Endothelial cell of umbilical vein (primary cell): ENCODE measurements at regions of chr10 and their contacts with region 1.

Region 1: GRCh38 chr10:6721480-6721879 is 141.4 kb upstream of the PRKCQ start:
- DNase-seq: peak; percentile 94
- H3K4me3 ChIP-seq: peak overlapping the region in 1 of 3 experiments; percentile 55
- H3K27ac ChIP-seq: peak overlapping the region; percentile 100
- H3K4me1 ChIP-seq: peaks cover 29% of the 10 kb centered on the region
- H3K27me3 ChIP-seq: no peaks in the 10 kb centered on the region
- CTCF ChIP-seq: peak; percentile 22 to 38
- POLR2A ChIP-seq: no peak

Region 2: DNA sequence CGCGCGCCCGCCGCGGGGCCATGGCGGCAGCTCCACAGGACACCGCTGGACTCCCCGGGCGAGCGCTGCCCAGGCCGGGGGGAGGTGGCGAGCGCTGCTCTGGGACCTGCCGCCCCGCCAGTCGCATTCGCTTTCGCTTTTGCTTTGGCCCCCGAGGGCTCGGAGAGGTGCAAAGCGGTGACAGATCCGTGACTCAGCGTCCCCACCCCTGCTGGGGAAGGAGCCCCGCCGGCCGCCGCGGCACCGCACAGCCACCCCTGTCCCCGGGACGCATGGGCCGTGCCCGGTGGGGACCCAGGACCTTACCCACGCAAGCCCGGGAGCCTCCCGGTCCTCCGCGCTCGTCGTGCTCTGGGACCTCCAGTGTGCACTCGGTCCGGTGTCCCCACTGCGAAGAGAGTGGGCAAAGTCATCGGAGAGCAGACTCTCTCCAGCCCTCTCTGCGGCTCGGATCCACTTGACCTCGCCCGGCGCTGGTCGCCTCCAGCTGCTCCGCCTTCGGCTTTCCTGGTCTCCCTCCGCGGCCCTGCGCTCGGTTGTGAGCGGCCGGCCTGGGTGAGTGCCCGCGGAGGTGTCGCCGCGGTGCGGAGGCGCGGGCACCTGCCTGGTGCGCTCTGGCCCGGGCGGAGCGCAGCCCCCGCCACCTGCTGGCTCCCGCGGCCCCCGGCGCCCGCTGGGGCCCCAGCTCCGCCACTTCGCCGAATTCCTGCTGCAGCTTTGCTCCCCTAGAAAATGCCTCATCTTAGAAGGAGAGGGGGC is 743.8 kb before region 1 on chr10 and contains the start of gene IL15RA:
- CTCF ChIA-PET with region 1: no interaction called
- POLR2A ChIA-PET with region 1: no interaction called
- dilution Hi-C with region 1: no loop called
- intact Hi-C with region 1: loop called (anchors 10 kb)
- DNase-seq: peak; percentile 82
- H3K4me3 ChIP-seq: peak within 1 kb of the TSS; percentile 10 to 98 (median 47)
- H3K27ac ChIP-seq: peak within 1 kb of the TSS; percentile 60
- H3K4me1 ChIP-seq: peaks cover 14% of the 10 kb centered on the region
- H3K27me3 ChIP-seq: peaks cover 0 to 2% of the 10 kb centered on the region in 2 experiments
- CTCF ChIP-seq: peak; percentile 6 to 13
- POLR2A ChIP-seq: no peak
- total RNA-seq, gene IL15RA: 16.1 and 18.8 TPM in 2 replicates

Region 3: DNA sequence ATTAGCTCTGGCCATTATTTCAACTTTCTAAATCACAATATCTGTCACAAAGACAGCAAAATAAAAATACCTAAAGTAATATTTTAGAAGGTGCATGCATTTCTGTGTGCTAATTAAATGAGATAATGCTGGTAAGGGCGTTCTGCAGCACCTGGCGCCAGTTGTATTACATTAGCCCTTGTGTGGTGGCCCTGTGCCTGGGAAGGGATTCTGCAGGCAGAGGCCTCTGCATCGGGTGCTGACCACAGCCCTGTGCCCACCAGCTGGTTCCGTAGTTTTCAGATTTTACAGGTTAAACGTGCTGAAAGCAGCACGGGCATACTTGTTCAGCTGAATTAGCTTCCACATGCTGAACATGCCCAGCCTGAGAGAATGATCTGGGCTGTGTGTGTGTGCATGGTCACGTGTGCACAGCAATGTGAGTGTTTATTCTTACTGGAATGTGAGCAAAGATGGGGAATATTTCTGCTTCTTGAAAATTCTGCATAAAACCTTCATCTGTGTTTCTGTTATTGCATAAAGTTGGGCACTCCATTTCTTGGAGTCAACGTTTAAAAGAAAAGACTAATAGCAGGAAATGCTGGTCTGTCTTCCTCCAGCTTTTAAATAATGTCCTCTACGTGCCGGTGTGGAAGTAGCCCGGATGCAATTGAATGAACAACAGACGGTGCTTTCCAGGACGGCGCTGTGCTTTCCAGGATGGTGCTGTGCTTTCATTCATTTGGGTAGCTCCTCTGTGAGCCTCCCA is 16.5 kb after region 1 on chr10:
- CTCF ChIA-PET with region 1: interaction called, 18 read pairs
- POLR2A ChIA-PET with region 1: no interaction called
- dilution Hi-C with region 1: no loop called
- intact Hi-C with region 1: no loop called
- DNase-seq: peak; percentile 69
- H3K4me3 ChIP-seq: no peak overlapping the region
- H3K27ac ChIP-seq: no peak overlapping the region
- H3K4me1 ChIP-seq: peaks cover 17% of the 10 kb centered on the region
- H3K27me3 ChIP-seq: peaks cover 0 to 8% of the 10 kb centered on the region in 2 experiments
- CTCF ChIP-seq: no peak
- POLR2A ChIP-seq: no peak

Region 4: GRCh38 chr10:6786579-6787031 is 65.1 kb after region 1 on chr10:
- CTCF ChIA-PET with region 1: interaction called, 11 read pairs
- POLR2A ChIA-PET with region 1: no interaction called
- dilution Hi-C with region 1: no loop called
- intact Hi-C with region 1: loop called (anchors 2 kb)
- DNase-seq: peak; percentile 76
- H3K4me3 ChIP-seq: no peak overlapping the region
- H3K27ac ChIP-seq: no peak overlapping the region
- H3K4me1 ChIP-seq: no peaks in the 10 kb centered on the region
- H3K27me3 ChIP-seq: peaks cover 3 to 10% of the 10 kb centered on the region in 2 experiments
- CTCF ChIP-seq: peak; percentile 35 to 46
- POLR2A ChIP-seq: no peak

Region 5: DNA sequence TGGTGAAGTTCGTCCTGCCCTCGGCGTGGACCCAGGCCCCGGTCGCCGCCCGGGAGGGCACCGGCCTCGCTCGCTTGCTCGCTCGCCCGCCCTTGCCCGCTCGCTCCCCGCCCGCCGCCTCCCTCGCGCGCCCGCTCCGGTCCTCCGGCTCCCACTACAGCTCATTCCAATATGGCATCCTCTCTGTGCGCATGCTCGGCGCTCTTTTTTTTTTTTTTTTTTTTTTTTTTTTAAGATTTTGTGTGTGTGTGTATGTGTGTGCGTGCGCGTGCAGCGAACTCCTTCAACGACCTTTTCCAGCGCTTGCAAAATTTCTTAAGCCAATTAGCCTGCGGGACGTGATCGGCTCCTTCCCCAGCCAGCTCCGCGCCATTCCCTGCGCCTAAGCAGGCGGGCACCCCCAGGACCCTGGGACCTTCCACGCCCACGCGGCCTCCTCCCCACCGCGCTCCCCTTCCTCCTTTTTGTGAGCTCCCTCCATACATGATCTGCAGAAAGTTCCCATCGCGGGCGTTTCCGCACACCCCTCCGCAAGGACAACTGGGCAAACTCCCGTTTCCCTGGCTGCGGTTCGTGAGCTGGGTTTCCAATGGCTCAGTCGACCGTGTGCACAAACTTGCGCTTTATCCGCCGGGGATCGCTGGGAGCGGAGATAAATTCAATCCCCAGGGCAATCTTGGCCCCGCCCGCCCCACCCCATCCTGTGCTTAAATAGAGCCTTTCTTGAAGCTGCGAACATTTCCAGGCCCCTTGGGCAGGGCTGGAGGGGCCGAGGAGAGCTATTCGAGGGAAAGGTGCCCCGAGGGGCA is 689.6 kb after region 1 on chr10 and contains the start of gene SFMBT2:
- CTCF ChIA-PET with region 1: interaction called, 10 read pairs
- POLR2A ChIA-PET with region 1: no interaction called
- dilution Hi-C with region 1: no loop called
- intact Hi-C with region 1: loop called (anchors 2 kb)
- DNase-seq: peak; percentile 65
- H3K4me3 ChIP-seq: peak within 1 kb of the TSS; percentile 23 to 51 (median 30)
- H3K27ac ChIP-seq: no peak within 1 kb of the TSS
- H3K4me1 ChIP-seq: peaks cover 26% of the 10 kb centered on the region
- H3K27me3 ChIP-seq: peaks cover 55 to 76% of the 10 kb centered on the region in 2 experiments
- CTCF ChIP-seq: no peak
- POLR2A ChIP-seq: no peak
- total RNA-seq, gene SFMBT2: 0.44 and 0.64 TPM in 2 replicates